A549 (cell line): ENCODE measurements at regions of chr19 and their contacts with region 1.

Region 1: GRCh38 chr19:18388100-18388959 is 2.4 kb downstream of the GDF15 start:
- DNase-seq: peak in 1 of 2 experiments; percentile 72
- ATAC-seq: peak in 1 of 2 experiments; percentile 32; a peak in 3 of 6 replicates
- H3K4me3 ChIP-seq: peak overlapping the region; percentile 98
- H3K27ac ChIP-seq: peak overlapping the region; percentile 97 to 99
- H3K4me1 ChIP-seq: peaks cover 26% of the 10 kb centered on the region
- CTCF ChIP-seq: peak; percentile 68
- EP300 ChIP-seq: no peak
- POLR2A ChIP-seq: no peak
- RAD21 ChIP-seq: peak; percentile 49 to 54; a peak in 4 of 5 replicates

Region 2: GRCh38 chr19:18291590-18292461 is 96.5 kb before region 1 on chr19:
- CTCF ChIA-PET with region 1: no interaction called
- POLR2A ChIA-PET with region 1: interaction called, 10 read pairs
- DNase-seq: peak; percentile 65 to 93
- ATAC-seq: peak; percentile 74 to 77
- H3K4me3 ChIP-seq: peak overlapping the region; percentile 56
- H3K27ac ChIP-seq: peak overlapping the region; percentile 99 to 100
- H3K4me1 ChIP-seq: peaks cover 30% of the 10 kb centered on the region
- CTCF ChIP-seq: no peak
- EP300 ChIP-seq: peak; percentile 45 to 87; a peak in 3 of 5 replicates
- POLR2A ChIP-seq: peak; percentile 29
- RAD21 ChIP-seq: no peak

Region 3: GRCh38 chr19:18357041-18357440 is 31.3 kb before region 1 on chr19:
- CTCF ChIA-PET with region 1: interaction called, 24 read pairs
- POLR2A ChIA-PET with region 1: interaction called, 11 read pairs
- DNase-seq: no peak
- ATAC-seq: no peak
- H3K4me3 ChIP-seq: no peak overlapping the region
- H3K27ac ChIP-seq: 0 out of 6 replicates have a peak overlapping the region, but pooled peaks of 1 of the 2 experiments have one; percentile 3
- H3K4me1 ChIP-seq: no peaks in the 10 kb centered on the region
- CTCF ChIP-seq: no peak
- EP300 ChIP-seq: no peak
- POLR2A ChIP-seq: no peak
- RAD21 ChIP-seq: no peak

Region 4: DNA sequence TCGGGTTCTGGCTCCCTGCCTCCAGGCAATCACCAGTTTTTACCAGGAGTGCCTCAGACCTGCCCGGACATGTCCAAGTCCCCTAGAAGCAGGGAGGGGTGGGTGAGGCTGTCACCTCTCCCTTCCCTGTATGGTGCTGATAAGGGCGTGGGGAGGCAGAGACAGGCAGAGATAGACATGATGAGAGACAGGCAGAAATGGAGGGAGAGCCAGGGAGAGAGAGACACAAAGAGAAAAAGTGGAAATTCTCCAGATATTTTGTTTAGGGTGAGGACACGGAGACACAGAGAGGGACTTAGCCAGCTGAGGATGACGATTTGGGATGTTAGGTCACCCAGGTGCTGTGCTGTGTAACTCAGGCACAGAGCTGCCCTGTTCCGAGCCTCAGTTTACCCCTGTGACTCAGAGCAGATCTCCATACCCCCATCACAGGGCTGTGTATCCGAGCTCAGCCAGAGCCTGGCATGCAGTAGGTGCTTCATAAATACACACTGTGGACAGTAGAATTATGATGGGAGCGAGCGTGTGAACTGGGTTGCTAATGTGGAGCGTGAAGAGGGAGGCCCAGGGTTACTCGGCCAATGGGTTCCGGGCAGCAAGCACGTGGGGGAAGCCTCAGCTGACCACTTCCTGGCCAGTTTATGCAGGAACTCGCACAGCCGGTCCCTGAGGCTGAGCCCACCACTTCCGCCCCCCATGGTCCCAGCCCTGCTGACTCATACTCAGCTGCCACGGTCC is 14.3 kb before region 1 on chr19:
- CTCF ChIA-PET with region 1: interaction called, 7 read pairs
- POLR2A ChIA-PET with region 1: interaction called, 16 read pairs
- DNase-seq: peak; percentile 74 to 94
- ATAC-seq: peak; percentile 87 to 92
- H3K4me3 ChIP-seq: 0 out of 3 replicates have a peak overlapping the region, but pooled peaks have one; percentile 12
- H3K27ac ChIP-seq: peak overlapping the region; percentile 99 to 100
- H3K4me1 ChIP-seq: peaks cover 62% of the 10 kb centered on the region
- CTCF ChIP-seq: no peak
- EP300 ChIP-seq: peak; percentile 79 to 95; a peak in 3 of 5 replicates
- POLR2A ChIP-seq: no peak
- RAD21 ChIP-seq: 0 out of 5 replicates have a peak, but pooled peaks of 1 of the 2 experiments have one; percentile 19

Region 5: DNA sequence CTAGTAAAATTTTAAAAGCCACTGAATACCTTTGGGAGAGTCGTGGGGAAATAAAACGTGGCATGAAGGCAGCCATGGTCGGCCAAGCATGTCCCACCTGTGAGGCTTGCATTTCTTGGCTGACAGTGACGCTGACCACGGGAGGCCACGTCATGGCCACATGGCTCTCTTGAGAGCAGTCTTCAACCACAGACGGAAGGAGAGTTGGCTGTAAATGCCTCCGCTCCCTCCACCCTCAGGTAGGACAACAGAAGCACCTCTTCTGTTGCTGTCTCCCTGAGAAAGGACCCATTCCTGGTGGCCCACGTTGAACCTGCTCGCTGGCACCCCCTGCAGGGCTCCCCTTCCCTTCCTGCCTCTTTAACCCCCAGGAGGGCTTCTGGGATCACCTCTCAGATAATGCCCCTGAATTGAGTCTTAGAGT is 19.7 kb after region 1 on chr19:
- CTCF ChIA-PET with region 1: interaction called, 75 read pairs
- POLR2A ChIA-PET with region 1: interaction called, 7 read pairs
- DNase-seq: no peak
- ATAC-seq: peak in 1 of 2 experiments; percentile 33; a peak in 1 of 6 replicates
- H3K4me3 ChIP-seq: no peak overlapping the region
- H3K27ac ChIP-seq: peak overlapping the region in 1 of 2 experiments; percentile 87; a peak in 3 of 6 replicates
- H3K4me1 ChIP-seq: peaks cover 11% of the 10 kb centered on the region; the same call in 2 of the 3 replicates
- CTCF ChIP-seq: 0 out of 3 replicates have a peak, but pooled peaks have one; percentile 18
- EP300 ChIP-seq: no peak
- POLR2A ChIP-seq: no peak
- RAD21 ChIP-seq: peak; percentile 18 to 46; a peak in 2 of 5 replicates